ENCODE measurements at regions of chr9 and their contacts with region 1.

Region 1: GRCh38 chr9:137918331-137919094 is 40.9 kb downstream of the CACNA1B start:
- DNase-seq: no peak
- ATAC-seq: no peak
- H3K4me3 ChIP-seq: no peak overlapping the region
- H3K27ac ChIP-seq: no peak overlapping the region
- H3K4me1 ChIP-seq: peaks cover 0 to 8% of the 10 kb centered on the region in 2 experiments; a peak in 2 of 4 replicates
- H3K27me3 ChIP-seq: no peaks in the 10 kb centered on the region
- CTCF ChIP-seq: no peak
- POLR2A ChIP-seq: no peak
- RAD21 ChIP-seq: no peak

Region 2: DNA sequence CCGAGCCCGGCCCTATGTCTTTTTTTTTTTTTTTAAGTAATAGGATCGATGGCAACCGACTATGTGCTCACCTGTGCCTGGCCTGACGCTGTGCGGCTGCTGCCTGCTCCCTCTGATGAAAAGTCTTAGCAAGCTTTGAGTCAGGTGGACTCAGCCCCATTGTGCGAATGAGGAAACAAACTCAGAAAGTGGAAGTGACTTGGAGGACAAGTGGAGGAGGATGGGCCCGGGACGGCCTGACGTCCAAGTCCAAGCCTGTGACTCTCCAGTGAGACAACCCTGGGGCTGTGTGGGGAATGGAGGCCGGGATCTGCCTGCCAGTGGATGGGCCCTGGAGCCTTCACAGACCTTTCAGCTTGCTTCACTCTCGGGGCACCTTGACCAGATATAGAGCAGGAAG is 553.5 kb before region 1 on chr9:
- CTCF ChIA-PET with region 1: no interaction called
- POLR2A ChIA-PET with region 1: no interaction called
- RAD21 ChIA-PET with region 1: no interaction called
- intact Hi-C with region 1: no loop called
- DNase-seq: no peak
- ATAC-seq: no peak
- H3K4me3 ChIP-seq: no peak overlapping the region
- H3K27ac ChIP-seq: no peak overlapping the region
- H3K4me1 ChIP-seq: no peaks in the 10 kb centered on the region
- H3K27me3 ChIP-seq: no peaks in the 10 kb centered on the region
- CTCF ChIP-seq: no peak
- POLR2A ChIP-seq: no peak
- RAD21 ChIP-seq: no peak

Region 3: GRCh38 chr9:137970505-137971481 is 52.3 kb after region 1 on chr9:
- CTCF ChIA-PET with region 1: no interaction called
- POLR2A ChIA-PET with region 1: no interaction called
- RAD21 ChIA-PET with region 1: no interaction called
- intact Hi-C with region 1: loop called (anchors 10 kb)
- DNase-seq: no peak
- ATAC-seq: no peak
- H3K4me3 ChIP-seq: no peak overlapping the region
- H3K27ac ChIP-seq: no peak overlapping the region
- H3K4me1 ChIP-seq: no peaks in the 10 kb centered on the region
- H3K27me3 ChIP-seq: no peaks in the 10 kb centered on the region
- CTCF ChIP-seq: no peak
- POLR2A ChIP-seq: no peak
- RAD21 ChIP-seq: no peak

Region 4: GRCh38 chr9:138082918-138083636 is 164.6 kb after region 1 on chr9:
- CTCF ChIA-PET with region 1: no interaction called
- POLR2A ChIA-PET with region 1: no interaction called
- RAD21 ChIA-PET with region 1: no interaction called
- intact Hi-C with region 1: loop called (anchors 10 kb)
- DNase-seq: no peak
- ATAC-seq: no peak
- H3K4me3 ChIP-seq: no peak overlapping the region
- H3K27ac ChIP-seq: no peak overlapping the region
- H3K4me1 ChIP-seq: no peaks in the 10 kb centered on the region
- H3K27me3 ChIP-seq: no peaks in the 10 kb centered on the region
- CTCF ChIP-seq: no peak
- POLR2A ChIP-seq: no peak
- RAD21 ChIP-seq: no peak